ENCODE measurements at regions of chr5 and their contacts with region 1.

Region 1: GRCh38 chr5:5492087-5492933 is 69.8 kb downstream of the ICE1 start:
- DNase-seq: peak; percentile 67
- H3K4me3 ChIP-seq: no peak overlapping the region
- H3K27ac ChIP-seq: no peak overlapping the region
- H3K4me1 ChIP-seq: peaks cover 5% of the 10 kb centered on the region; the same call in 1 of the 2 replicates
- H3K27me3 ChIP-seq: 0 out of 2 replicates have a peak, but pooled peaks cover 1% of the 10 kb centered on the region

Region 2: DNA sequence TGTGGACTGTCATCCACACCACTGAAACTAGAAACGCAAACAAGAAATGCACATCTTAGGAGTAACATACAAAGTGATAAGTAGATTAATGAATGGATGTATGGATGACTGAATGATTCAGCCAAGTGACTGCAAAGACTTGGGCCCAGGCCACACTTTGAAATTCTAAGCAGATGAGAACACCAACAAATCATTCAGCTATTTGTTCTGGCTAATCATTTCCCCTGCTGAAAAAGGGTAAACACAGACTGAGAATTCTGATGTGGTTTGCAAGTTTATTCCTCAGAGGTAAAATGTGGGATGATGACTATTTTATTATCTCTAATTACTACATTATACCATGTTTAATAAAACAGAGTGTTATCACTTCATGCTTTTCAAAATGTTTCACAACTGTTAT is 515.4 kb before region 1 on chr5:
- in situ Hi-C with region 1: no loop called
- DNase-seq: peak; percentile 57
- H3K4me3 ChIP-seq: no peak overlapping the region
- H3K27ac ChIP-seq: no peak overlapping the region
- H3K4me1 ChIP-seq: peaks cover 10% of the 10 kb centered on the region; the same call in 1 of the 2 replicates
- H3K27me3 ChIP-seq: peaks cover 52% of the 10 kb centered on the region

Region 3: GRCh38 chr5:6188344-6188743 is 696.0 kb after region 1 on chr5:
- in situ Hi-C with region 1: no loop called
- DNase-seq: no peak
- H3K4me3 ChIP-seq: no peak overlapping the region
- H3K27ac ChIP-seq: no peak overlapping the region
- H3K4me1 ChIP-seq: no peaks in the 10 kb centered on the region
- H3K27me3 ChIP-seq: no peaks in the 10 kb centered on the region

Region 4: GRCh38 chr5:6576861-6577501 is 1084.7 kb after region 1 on chr5:
- in situ Hi-C with region 1: loop called (anchors 10 kb)
- DNase-seq: peak; percentile 69
- H3K4me3 ChIP-seq: no peak overlapping the region
- H3K27ac ChIP-seq: no peak overlapping the region
- H3K4me1 ChIP-seq: no peaks in the 10 kb centered on the region
- H3K27me3 ChIP-seq: peaks cover 47% of the 10 kb centered on the region